Dorsolateral prefrontal cortex (tissue), 120 donors: ENCODE measurements at regions of chr18 and their contacts with region 1.

Region 1: GRCh38 chr18:58180738-58181353 is 136.8 kb downstream of the NEDD4L start:
- DNase-seq: peak in 3 of 10 donors; percentile 61 to 68 (median 65)
- H3K4me3 ChIP-seq: no peak overlapping the region
- H3K27ac ChIP-seq: no peak overlapping the region
- H3K27me3 ChIP-seq: no peaks in the 10 kb centered on the region
- CTCF ChIP-seq: peak; percentile 62 to 93 (median 82)

Region 2: DNA sequence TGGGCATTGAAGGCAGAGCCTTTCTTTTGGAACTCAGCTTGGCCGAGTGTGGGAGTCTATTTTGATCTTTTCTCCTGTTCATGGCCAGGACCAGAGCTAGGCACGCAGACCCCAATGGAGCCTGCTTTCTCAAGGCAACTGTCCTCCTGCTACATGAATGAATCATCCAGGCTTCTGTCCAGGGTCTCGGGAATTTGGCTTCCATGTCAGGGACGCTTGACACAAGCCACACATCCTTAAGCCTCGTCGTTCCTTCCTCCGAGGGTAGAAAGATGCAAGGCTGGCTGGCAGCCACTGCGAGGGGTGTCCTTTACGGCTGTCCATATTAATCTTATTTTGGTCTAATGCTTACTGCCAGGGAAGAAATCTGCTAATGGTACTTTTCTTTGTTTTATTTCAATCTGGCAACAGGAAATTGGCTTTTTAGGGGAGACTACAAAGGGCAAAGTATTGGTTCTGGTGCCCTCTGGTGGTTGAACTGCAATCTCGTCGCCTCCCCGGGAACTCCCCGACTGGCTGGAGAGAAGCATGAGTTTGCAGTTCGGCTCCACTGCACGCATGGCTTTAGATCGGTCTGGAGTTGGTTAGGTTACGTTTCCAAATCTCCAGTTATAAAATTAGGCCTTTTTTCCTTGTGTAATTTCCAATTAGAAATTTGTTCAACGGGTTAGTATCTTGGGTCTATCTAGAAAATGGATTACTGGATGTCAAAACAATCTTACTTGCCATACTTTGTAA is 312.8 kb after region 1 on chr18:
- intact Hi-C with region 1: loop called in 1 of 2 experiments (anchors 5 kb)
- DNase-seq: peak; percentile 43 to 85 (median 76)
- H3K4me3 ChIP-seq: peak overlapping the region in 46 of 59 donors; percentile 5 to 61 (median 32)
- H3K27ac ChIP-seq: peak overlapping the region in 39 of 59 donors; percentile 6 to 79 (median 55)
- H3K27me3 ChIP-seq: peaks cover 0 to 4% (median 0%) of the 10 kb centered on the region in 45 donors
- CTCF ChIP-seq: peak; percentile 71 to 96 (median 87)